ENCODE measurements at regions of chr2 and their contacts with region 1.

Region 1: GRCh38 chr2:200471324-200471848 is 38.5 kb downstream of the KCTD18 start:
- DNase-seq: peak; percentile 63
- H3K4me3 Mint-ChIP-seq: no peak overlapping the region
- H3K27ac Mint-ChIP-seq: no peak overlapping the region
- H3K4me1 Mint-ChIP-seq: peaks cover 35% of the 10 kb centered on the region
- H3K27me3 Mint-ChIP-seq: no peaks in the 10 kb centered on the region

Region 2: GRCh38 chr2:199985625-199986207 is 485.7 kb before region 1 on chr2:
- CTCF ChIA-PET with region 1: interaction called, 24 read pairs
- POLR2A ChIA-PET with region 1: no interaction called
- intact Hi-C with region 1: loop called (anchors 1 kb)
- DNase-seq: peak; percentile 73
- H3K4me3 Mint-ChIP-seq: no peak overlapping the region
- H3K27ac Mint-ChIP-seq: no peak overlapping the region
- H3K4me1 Mint-ChIP-seq: peaks cover 4% of the 10 kb centered on the region
- H3K27me3 Mint-ChIP-seq: no peaks in the 10 kb centered on the region

Region 3: DNA sequence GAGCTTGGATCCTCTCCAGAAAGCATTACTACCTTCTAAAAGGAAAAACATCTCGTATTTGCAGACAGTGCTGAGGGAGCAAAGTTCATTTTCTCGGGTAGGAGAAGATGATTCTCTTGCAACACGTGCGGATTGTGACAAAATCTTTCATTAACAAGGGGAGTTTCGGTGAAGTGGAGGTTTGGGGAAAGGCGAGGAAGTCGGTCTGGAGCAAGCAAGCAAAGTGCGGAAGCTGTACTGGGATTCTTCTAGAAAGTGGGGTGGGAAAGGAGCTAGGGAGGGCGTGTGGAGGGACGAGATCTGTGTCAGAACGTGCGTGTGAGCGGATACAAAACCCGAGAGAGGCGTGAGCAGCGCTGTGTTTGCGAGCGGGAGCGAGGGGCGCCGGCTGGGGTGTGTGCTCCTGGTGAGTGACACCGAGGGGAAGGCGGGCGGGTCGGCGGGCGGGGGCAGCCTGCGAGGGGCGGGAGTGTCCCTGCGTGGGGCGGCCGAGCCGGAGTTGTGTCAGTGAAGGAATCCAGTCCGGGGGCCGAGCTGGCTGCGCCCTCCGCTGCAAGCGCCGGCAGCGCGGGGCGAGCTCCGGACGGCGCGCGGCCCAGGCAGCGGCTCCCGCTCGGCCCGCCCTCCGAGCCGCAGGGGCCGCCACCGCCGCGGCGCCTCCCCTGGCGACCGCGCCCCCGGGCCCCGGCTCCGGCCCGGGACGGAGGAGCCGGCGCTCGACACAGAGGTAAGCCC is 165.0 kb before region 1 on chr2 and contains the start of gene SPATS2L:
- CTCF ChIA-PET with region 1: interaction called, 15 read pairs
- POLR2A ChIA-PET with region 1: no interaction called
- intact Hi-C with region 1: loop called (anchors 2 kb)
- DNase-seq: peak; percentile 75
- H3K4me3 Mint-ChIP-seq: peak within 1 kb of the TSS; percentile 82
- H3K27ac Mint-ChIP-seq: peak within 1 kb of the TSS; percentile 52
- H3K4me1 Mint-ChIP-seq: peaks cover 25% of the 10 kb centered on the region
- H3K27me3 Mint-ChIP-seq: peaks cover 4% of the 10 kb centered on the region
- total RNA-seq, gene SPATS2L: 25.4 to 28.8 TPM

Region 4: DNA sequence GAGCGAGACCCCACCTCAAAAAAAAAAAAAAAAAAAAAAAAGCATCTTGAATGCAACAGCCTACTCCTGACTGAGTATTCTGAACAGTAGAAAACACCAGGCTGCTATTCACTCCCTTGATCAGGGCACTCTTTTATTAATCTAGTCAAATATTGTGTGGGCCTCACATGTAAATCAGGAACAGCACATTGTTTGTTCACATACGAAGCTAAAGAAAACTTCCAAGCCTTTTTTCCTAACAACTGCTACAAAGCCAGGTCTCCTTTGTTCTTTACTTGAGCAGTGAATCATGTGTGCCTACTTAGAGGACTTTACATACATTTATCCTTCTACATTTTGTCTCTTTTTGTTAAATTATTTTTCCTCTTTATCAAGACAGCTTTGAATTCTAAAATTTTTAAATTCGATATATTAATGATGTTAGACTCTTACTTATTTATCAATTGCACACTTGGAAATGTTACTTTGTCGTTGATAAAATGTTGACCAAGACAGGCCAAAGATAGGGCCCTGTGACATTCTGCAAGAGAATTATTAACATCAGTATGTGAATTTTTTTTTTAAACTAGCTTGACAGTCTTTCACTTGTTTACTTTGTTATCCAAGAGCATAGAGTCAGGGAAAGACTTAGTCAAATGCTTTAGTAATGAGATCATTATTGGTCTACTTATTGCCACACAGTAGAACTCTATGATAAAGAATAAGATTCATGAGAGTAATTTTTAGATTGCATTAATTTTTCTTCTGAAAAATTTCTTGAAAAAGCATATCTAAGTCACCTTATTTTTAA is 151.6 kb before region 1 on chr2:
- CTCF ChIA-PET with region 1: no interaction called
- POLR2A ChIA-PET with region 1: no interaction called
- intact Hi-C with region 1: loop called (anchors 5 kb)
- DNase-seq: no peak
- H3K4me3 Mint-ChIP-seq: no peak overlapping the region
- H3K27ac Mint-ChIP-seq: no peak overlapping the region
- H3K4me1 Mint-ChIP-seq: peaks cover 35% of the 10 kb centered on the region
- H3K27me3 Mint-ChIP-seq: no peaks in the 10 kb centered on the region

Region 5: GRCh38 chr2:201057087-201057521 is 585.7 kb after region 1 on chr2:
- CTCF ChIA-PET with region 1: no interaction called
- POLR2A ChIA-PET with region 1: no interaction called
- intact Hi-C with region 1: no loop called
- DNase-seq: no peak
- H3K4me3 Mint-ChIP-seq: no peak overlapping the region
- H3K27ac Mint-ChIP-seq: no peak overlapping the region
- H3K4me1 Mint-ChIP-seq: peaks cover 32% of the 10 kb centered on the region
- H3K27me3 Mint-ChIP-seq: no peaks in the 10 kb centered on the region